ENCODE measurements at regions of chr3 and their contacts with region 1.

Region 1: DNA sequence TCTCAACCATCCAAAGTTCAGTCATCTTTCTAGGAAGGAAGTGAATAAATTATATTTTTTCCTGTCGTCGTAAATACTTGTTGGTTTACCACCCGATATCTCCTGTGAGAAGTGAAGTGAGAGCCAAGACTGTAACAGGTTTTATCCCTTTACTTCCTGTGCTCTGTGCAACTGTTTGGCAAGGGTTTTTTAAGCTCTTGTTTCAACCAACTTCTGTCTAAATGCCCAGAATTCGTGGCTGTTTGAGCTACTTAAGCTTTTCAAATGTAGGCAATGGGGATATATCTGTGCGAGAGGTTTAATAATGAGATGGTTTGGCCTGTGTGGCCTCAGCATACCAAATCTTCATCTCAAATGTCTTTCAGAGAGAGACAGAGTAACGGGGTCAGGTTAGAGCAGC is 134.7 kb downstream of the LRTM1 start:
- DNase-seq: no peak
- H3K4me3 ChIP-seq: no peak overlapping the region
- H3K27ac ChIP-seq: no peak overlapping the region
- H3K4me1 ChIP-seq: peaks cover 0 to 9% (median 0%) of the 10 kb centered on the region in 4 experiments; a peak in 1 of 7 replicates
- H3K27me3 ChIP-seq: no peaks in the 10 kb centered on the region
- CTCF ChIP-seq: no peak
- EP300 ChIP-seq: no peak
- POLR2A ChIP-seq: no peak
- RAD21 ChIP-seq: no peak

Region 2: GRCh38 chr3:54213910-54214309 is 579.3 kb before region 1 on chr3:
- CTCF ChIA-PET with region 1: no interaction called
- POLR2A ChIA-PET with region 1: no interaction called
- DNase-seq: no peak
- H3K4me3 ChIP-seq: no peak overlapping the region
- H3K27ac ChIP-seq: no peak overlapping the region
- H3K4me1 ChIP-seq: no peaks in the 10 kb centered on the region
- H3K27me3 ChIP-seq: no peaks in the 10 kb centered on the region; a peak in 1 of 7 replicates
- CTCF ChIP-seq: no peak
- EP300 ChIP-seq: no peak
- POLR2A ChIP-seq: no peak
- RAD21 ChIP-seq: no peak

Region 3: GRCh38 chr3:54781728-54782127 is 11.4 kb before region 1 on chr3:
- CTCF ChIA-PET with region 1: interaction called, 13 read pairs
- POLR2A ChIA-PET with region 1: no interaction called
- DNase-seq: peak in 1 of 2 experiments; percentile 39
- H3K4me3 ChIP-seq: no peak overlapping the region
- H3K27ac ChIP-seq: no peak overlapping the region
- H3K4me1 ChIP-seq: peaks cover 0 to 7% (median 0%) of the 10 kb centered on the region in 4 experiments; a peak in 2 of 7 replicates
- H3K27me3 ChIP-seq: no peaks in the 10 kb centered on the region
- CTCF ChIP-seq: peak in 2 of 3 experiments; percentile 22 to 34; a peak in 3 of 4 replicates
- EP300 ChIP-seq: no peak
- POLR2A ChIP-seq: no peak
- RAD21 ChIP-seq: peak; percentile 5 to 31; a peak in 2 of 4 replicates